WTC11 (cell line): ENCODE measurements at regions of chr2 and their contacts with region 1.

Region 1: DNA sequence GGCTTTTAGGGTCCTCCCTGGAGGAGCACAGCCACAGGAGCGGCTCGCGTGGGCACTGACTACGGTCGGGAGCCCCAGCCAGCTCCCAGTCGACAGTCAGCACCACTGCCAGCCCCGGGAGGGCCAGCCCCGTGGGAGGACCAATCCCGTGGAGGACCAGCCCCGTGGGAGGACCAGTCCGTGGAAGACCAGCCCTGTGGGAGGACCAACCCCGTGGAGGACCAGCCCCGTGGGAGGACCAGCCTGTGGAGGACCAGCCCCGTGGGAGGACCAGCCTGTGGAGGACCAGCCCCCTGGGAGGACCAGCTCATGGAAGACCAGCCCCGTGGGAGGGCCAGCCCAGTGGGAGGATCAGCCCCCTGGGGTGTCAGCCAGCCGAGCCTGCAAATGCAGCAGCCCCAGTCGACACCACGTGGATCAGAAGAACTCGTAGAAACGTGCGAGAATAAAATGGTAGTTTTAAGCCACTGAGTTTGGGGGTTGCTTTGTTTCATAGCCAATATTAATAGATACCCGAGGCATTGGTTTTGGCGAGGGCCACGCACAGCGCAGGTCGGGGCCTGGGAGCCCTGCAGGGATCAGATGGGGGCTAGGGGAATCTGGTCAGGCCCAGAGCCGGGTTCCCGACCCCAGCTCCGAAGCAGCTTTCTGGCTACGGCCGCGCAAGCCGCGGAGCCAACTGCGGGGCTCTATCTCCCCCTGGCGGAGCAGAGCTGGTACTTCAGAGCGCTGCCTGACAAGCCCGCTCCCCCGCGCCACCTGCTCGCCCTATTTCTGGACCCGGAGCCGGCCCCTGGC is 73.0 kb downstream of the TEX51 start:
- DNase-seq: peak; percentile 86
- ATAC-seq: peak; percentile 88
- H3K4me3 Mint-ChIP-seq: peak overlapping the region; percentile 14; the same call in 1 of the 2 replicates
- H3K27ac Mint-ChIP-seq: no peak overlapping the region
- H3K4me1 Mint-ChIP-seq: peaks cover 10% of the 10 kb centered on the region
- H3K27me3 Mint-ChIP-seq: peaks cover 45% of the 10 kb centered on the region
- CTCF ChIP-seq: peak; percentile 96

Region 2: GRCh38 chr2:126614524-126615227 is 357.0 kb before region 1 on chr2:
- CTCF ChIA-PET with region 1: no interaction called
- POLR2A ChIA-PET with region 1: no interaction called
- DNase-seq: no peak
- ATAC-seq: no peak
- H3K4me3 Mint-ChIP-seq: no peak overlapping the region
- H3K27ac Mint-ChIP-seq: no peak overlapping the region
- H3K4me1 Mint-ChIP-seq: no peaks in the 10 kb centered on the region
- H3K27me3 Mint-ChIP-seq: no peaks in the 10 kb centered on the region
- CTCF ChIP-seq: no peak

Region 3: DNA sequence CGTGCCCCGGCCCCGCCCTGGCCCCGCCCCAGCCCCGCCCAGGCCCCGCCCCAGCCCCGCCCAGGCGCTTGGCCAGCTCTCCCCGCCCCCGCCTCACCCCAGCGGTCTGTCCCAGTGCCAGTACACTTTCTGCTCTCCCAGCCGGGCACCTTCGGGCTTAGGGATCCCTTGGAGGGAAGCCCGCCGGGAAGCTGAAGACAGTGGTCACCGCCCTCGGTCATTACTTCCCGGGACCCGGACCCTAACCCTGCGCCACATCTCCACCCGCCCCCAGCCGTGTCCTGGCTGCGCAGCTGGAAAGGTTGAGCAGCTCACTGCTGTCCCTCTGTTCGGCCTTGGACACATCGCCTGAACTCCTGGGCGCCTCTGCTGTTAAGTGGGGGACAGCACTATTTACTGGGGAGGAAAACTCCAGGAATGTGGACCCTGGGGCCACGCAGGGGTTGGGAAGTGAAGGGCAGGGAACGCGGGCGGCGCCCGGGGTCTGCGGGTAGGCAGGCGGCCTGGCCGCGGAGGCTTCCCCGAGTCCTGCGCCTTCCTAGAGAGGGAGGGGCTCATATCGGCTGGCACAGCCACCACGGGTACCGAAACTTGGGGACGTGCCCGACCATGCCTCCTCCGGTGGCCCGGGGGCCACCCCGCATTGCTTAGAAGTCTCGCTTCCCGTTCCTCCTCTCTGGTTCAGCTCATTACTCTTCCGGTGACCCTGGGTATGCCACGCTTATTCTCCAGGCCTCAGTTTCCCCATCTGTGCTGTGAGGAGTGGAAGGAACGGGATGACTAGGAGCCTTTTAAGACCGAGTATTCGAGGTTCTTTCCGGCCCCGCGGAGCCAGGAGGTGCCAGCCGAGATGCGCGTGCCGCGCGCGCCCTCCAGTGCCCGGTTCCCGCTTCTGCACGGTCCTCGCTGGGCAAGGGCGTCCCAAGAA is 194.7 kb before region 1 on chr2:
- CTCF ChIA-PET with region 1: interaction called, 65 read pairs
- POLR2A ChIA-PET with region 1: no interaction called
- DNase-seq: peak; percentile 84
- ATAC-seq: peak; percentile 78
- H3K4me3 Mint-ChIP-seq: peak overlapping the region; percentile 82
- H3K27ac Mint-ChIP-seq: no peak overlapping the region
- H3K4me1 Mint-ChIP-seq: peaks cover 11% of the 10 kb centered on the region; the same call in 1 of the 2 replicates
- H3K27me3 Mint-ChIP-seq: peaks cover 17% of the 10 kb centered on the region
- CTCF ChIP-seq: peak; percentile 79

Region 4: GRCh38 chr2:126809340-126809739 is 162.3 kb before region 1 on chr2:
- CTCF ChIA-PET with region 1: interaction called, 10 read pairs
- POLR2A ChIA-PET with region 1: no interaction called
- DNase-seq: no peak
- ATAC-seq: peak; percentile 89
- H3K4me3 Mint-ChIP-seq: no peak overlapping the region
- H3K27ac Mint-ChIP-seq: no peak overlapping the region
- H3K4me1 Mint-ChIP-seq: peaks cover 19% of the 10 kb centered on the region
- H3K27me3 Mint-ChIP-seq: no peaks in the 10 kb centered on the region
- CTCF ChIP-seq: no peak

Region 5: DNA sequence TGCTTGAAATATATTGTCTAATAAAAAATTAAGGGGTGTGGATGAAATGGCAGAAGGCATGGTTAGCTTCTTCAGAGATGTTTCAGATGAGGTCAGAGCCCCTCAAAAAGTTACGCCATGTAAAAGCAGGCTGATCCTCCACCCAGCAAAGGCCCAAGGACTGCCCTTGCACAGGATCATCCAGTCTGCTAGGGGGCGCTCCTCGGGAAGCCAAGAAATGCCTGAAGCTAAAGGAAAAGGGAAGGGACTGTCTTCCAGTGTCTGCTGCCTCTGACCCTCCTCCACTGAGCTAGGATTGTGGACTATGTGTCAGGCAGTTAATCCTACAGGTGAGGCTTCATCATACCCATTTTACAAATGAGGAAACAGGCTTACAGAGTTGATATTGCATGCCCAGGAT is 106.8 kb before region 1 on chr2:
- CTCF ChIA-PET with region 1: interaction called, 34 read pairs
- POLR2A ChIA-PET with region 1: no interaction called
- DNase-seq: peak; percentile 62
- ATAC-seq: peak; percentile 87
- H3K4me3 Mint-ChIP-seq: no peak overlapping the region
- H3K27ac Mint-ChIP-seq: no peak overlapping the region
- H3K4me1 Mint-ChIP-seq: no peaks in the 10 kb centered on the region; the same call in 1 of the 2 replicates
- H3K27me3 Mint-ChIP-seq: no peaks in the 10 kb centered on the region; the same call in 1 of the 2 replicates
- CTCF ChIP-seq: no peak; the same call in 1 of the 2 replicates

Region 6: GRCh38 chr2:126954831-126955230 is 16.8 kb before region 1 on chr2:
- CTCF ChIA-PET with region 1: interaction called, 15 read pairs
- POLR2A ChIA-PET with region 1: no interaction called
- DNase-seq: no peak
- ATAC-seq: no peak
- H3K4me3 Mint-ChIP-seq: no peak overlapping the region
- H3K27ac Mint-ChIP-seq: no peak overlapping the region
- H3K4me1 Mint-ChIP-seq: peaks cover 12% of the 10 kb centered on the region
- H3K27me3 Mint-ChIP-seq: peaks cover 47% of the 10 kb centered on the region
- CTCF ChIP-seq: no peak

Region 7: DNA sequence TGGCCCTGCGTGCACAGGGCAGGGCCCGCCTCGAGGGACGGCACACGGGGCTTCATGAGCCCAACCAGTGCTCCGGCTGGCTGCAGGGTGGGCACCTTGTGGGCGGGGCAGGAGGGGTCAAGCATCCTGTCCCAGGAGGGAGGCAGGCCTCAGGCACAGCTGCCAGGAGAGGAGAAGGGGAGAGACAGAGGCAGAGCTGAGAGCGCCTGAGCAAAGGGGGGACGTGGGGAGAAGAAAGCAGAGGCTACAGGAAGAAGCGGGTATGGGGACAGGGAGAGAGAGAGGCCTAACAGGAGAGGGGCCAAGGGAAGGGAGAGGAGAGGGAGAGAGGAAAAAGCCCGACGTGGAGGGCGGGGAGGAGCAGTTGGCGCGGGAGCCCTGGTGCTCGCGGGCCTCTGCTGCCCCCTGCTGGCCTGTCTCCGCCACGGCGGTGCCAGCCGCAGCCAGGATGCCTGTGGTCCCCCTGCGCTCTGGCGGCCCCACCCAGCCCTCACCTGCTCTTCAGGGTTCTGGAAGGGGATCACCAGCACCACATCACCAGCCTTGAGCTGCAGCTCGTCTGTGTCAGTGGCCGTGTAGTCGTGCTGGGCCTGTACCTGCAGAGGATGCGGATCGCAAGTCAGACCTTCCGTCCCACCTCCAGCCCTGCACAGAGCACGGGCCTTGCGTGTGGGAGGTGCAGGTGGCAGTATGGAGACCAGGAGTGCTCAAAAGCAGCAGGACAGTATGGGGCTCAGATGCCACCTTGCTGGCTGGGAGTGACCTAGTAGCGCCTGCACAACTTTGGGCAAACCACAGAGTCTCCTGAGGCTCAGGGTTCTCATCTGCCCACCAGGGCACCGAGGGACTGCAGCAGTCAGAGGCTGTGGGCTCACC is 78.5 kb after region 1 on chr2:
- CTCF ChIA-PET with region 1: interaction called, 13 read pairs
- POLR2A ChIA-PET with region 1: no interaction called
- DNase-seq: peak; percentile 84
- ATAC-seq: peak; percentile 81
- H3K4me3 Mint-ChIP-seq: no peak overlapping the region
- H3K27ac Mint-ChIP-seq: no peak overlapping the region
- H3K4me1 Mint-ChIP-seq: no peaks in the 10 kb centered on the region
- H3K27me3 Mint-ChIP-seq: peaks cover 3% of the 10 kb centered on the region
- CTCF ChIP-seq: peak; percentile 91